ENCODE measurements at regions of chr7 and their contacts with region 1.

Region 1: GRCh38 chr7:158976849-158977593 is 120.7 kb downstream of the DYNC2I1 start:
- DNase-seq: peak; percentile 91
- H3K4me3 Mint-ChIP-seq: peak overlapping the region; percentile 71
- H3K27ac Mint-ChIP-seq: peak overlapping the region; percentile 65
- H3K4me1 Mint-ChIP-seq: peaks cover 19% of the 10 kb centered on the region
- H3K27me3 Mint-ChIP-seq: no peaks in the 10 kb centered on the region

Region 2: DNA sequence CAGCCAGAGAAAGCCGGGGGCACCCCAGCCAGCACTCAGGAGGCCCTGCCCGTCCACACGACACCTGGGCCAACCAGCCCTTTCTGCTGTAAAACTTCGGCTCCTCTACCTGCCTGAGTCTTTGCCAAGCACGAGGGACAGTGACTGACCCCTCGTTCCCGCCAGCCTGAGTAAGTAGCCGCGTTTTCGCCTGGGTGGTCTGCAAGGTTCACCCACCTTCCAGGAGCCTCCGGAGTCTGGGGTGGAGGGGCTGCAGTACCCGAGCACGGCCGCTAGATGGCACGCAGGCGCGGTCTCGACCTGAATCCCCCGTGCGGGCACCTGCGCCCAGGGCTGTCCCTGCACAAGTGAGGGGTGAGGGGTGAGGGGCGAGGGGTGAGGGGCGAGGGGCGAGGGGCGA is 582.1 kb before region 1 on chr7:
- CTCF ChIA-PET with region 1: interaction called, 3 read pairs
- POLR2A ChIA-PET with region 1: no interaction called
- intact Hi-C with region 1: loop called (anchors 10 kb)
- DNase-seq: peak; percentile 44
- H3K4me3 Mint-ChIP-seq: no peak overlapping the region
- H3K27ac Mint-ChIP-seq: no peak overlapping the region
- H3K4me1 Mint-ChIP-seq: no peaks in the 10 kb centered on the region
- H3K27me3 Mint-ChIP-seq: no peaks in the 10 kb centered on the region

Region 3: GRCh38 chr7:158695726-158696452 is 281.1 kb before region 1 on chr7:
- CTCF ChIA-PET with region 1: interaction called, 33 read pairs
- POLR2A ChIA-PET with region 1: no interaction called
- intact Hi-C with region 1: loop called (anchors 1 kb)
- DNase-seq: peak; percentile 25
- H3K4me3 Mint-ChIP-seq: no peak overlapping the region
- H3K27ac Mint-ChIP-seq: no peak overlapping the region
- H3K4me1 Mint-ChIP-seq: peaks cover 20% of the 10 kb centered on the region
- H3K27me3 Mint-ChIP-seq: no peaks in the 10 kb centered on the region

Region 4: DNA sequence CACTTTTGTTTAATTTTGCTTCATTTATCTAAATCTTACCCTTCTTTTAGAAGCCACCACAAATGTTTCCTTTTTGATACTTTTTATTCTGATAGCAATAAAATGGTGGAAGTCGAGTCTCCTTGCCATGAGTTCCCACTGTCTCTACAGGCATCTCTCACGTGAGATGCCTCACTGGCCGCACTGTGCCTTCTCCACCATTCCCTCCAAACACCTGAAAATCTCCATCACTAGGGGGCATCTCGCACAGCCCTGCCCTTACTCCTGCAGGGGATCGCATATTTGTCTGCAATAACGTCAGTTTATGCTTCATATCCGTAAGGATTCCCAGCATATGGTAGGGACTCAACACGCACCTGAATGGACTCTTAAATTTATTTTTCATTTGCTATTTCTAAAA is 216.1 kb before region 1 on chr7:
- CTCF ChIA-PET with region 1: interaction called, 5 read pairs
- POLR2A ChIA-PET with region 1: no interaction called
- intact Hi-C with region 1: loop called (anchors 1 kb)
- DNase-seq: no peak
- H3K4me3 Mint-ChIP-seq: no peak overlapping the region
- H3K27ac Mint-ChIP-seq: no peak overlapping the region
- H3K4me1 Mint-ChIP-seq: peaks cover 11% of the 10 kb centered on the region
- H3K27me3 Mint-ChIP-seq: no peaks in the 10 kb centered on the region

Region 5: GRCh38 chr7:158789842-158790241 is 187.2 kb before region 1 on chr7:
- CTCF ChIA-PET with region 1: no interaction called
- POLR2A ChIA-PET with region 1: no interaction called
- intact Hi-C with region 1: no loop called
- DNase-seq: no peak
- H3K4me3 Mint-ChIP-seq: no peak overlapping the region
- H3K27ac Mint-ChIP-seq: no peak overlapping the region
- H3K4me1 Mint-ChIP-seq: no peaks in the 10 kb centered on the region
- H3K27me3 Mint-ChIP-seq: no peaks in the 10 kb centered on the region

Region 6: GRCh38 chr7:158863611-158864506 is 113.2 kb before region 1 on chr7:
- CTCF ChIA-PET with region 1: interaction called, 11 read pairs
- POLR2A ChIA-PET with region 1: interaction called, 6 read pairs
- intact Hi-C with region 1: loop called (anchors 10 kb)
- DNase-seq: peak; percentile 69
- H3K4me3 Mint-ChIP-seq: peak overlapping the region; percentile 77
- H3K27ac Mint-ChIP-seq: peak overlapping the region; percentile 78
- H3K4me1 Mint-ChIP-seq: peaks cover 32% of the 10 kb centered on the region
- H3K27me3 Mint-ChIP-seq: no peaks in the 10 kb centered on the region

Region 7: DNA sequence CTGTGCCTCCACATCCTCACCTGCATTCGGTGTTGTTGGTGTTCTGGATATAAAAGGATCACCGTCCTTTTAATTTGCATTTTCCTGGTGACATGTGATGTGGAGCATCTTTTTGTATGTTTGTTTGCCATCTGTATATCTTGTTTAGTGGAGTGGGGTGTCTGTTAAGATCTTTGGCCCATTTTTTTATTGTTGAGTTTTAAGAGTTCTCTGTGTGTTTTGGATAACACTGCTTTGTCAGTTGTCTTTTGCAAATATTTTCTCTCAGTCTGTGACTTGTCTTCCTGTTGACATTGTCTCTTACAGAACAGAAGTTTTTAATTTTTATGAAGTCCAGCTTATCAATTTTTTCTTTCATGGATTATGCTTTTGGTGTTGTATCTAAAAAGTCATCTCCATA is 82.2 kb before region 1 on chr7:
- CTCF ChIA-PET with region 1: no interaction called
- POLR2A ChIA-PET with region 1: no interaction called
- intact Hi-C with region 1: no loop called
- DNase-seq: no peak
- H3K4me3 Mint-ChIP-seq: no peak overlapping the region
- H3K27ac Mint-ChIP-seq: no peak overlapping the region
- H3K4me1 Mint-ChIP-seq: no peaks in the 10 kb centered on the region
- H3K27me3 Mint-ChIP-seq: no peaks in the 10 kb centered on the region

Region 8: DNA sequence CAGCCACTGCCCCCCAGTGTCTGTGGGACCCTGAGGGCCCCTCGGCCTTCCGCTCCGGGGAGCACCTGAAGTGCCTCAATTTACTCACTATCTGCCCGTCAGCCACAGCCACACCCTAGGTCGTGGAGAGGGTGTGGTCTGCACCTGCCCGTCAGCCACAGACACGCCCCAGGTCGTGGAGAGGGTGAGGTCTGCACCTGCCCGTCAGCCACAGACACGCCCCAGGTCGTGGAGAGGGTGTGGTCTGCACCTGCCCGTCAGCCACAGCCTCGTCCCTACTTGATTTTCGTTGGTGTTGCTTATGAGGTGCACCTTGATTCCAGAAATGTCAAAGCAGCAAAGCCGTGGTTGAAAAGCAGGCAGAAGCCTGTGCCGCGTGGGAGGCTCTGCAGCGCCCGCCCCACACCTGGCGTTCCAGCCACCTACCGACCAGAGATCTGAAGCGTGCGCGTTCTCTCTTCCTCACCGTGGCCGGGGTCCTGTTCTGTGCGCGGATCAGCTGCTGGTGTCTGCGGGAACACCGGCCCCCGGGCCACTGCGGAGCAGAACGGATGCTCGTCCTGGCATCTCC is 19.0 kb before region 1 on chr7:
- CTCF ChIA-PET with region 1: interaction called, 10 read pairs
- POLR2A ChIA-PET with region 1: no interaction called
- intact Hi-C with region 1: no loop called
- DNase-seq: peak; percentile 50
- H3K4me3 Mint-ChIP-seq: peak overlapping the region; percentile 61
- H3K27ac Mint-ChIP-seq: no peak overlapping the region
- H3K4me1 Mint-ChIP-seq: peaks cover 12% of the 10 kb centered on the region
- H3K27me3 Mint-ChIP-seq: peaks cover 8% of the 10 kb centered on the region

Measured in activated CD4-positive, alpha-beta memory T cell treated with anti-CD3 and anti-CD28 coated beads for 36 hours (primary cell).